MCF 10A (cell line): ENCODE measurements at regions of chr9 and their contacts with region 1.

Region 1: DNA sequence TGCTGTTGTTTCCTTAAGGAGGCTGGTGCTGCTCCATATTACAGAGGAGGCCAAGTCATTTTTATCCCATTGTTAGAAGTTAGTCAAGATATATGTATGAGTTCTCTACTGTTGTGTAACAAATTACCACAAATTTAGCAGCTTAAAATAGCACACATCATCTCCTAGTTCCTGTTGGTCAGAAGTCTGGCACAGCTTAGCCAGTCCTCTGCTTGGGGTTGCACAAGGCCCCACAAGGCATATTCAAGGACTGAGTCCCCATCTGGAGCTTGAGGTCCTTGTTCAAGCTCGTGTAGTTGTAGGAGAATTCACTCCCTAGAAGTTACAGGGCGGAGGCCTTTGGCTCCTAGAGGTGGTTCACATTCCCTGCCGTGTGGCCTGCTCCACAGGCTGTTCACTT is 14.7 kb downstream of the MTAP start:
- DNase-seq: peak; percentile 80
- H3K4me3 Mint-ChIP-seq: no peak overlapping the region
- H3K27ac Mint-ChIP-seq: no peak overlapping the region
- H3K4me1 Mint-ChIP-seq: no peaks in the 10 kb centered on the region
- H3K27me3 Mint-ChIP-seq: no peaks in the 10 kb centered on the region
- CTCF ChIP-seq: no peak

Region 2: DNA sequence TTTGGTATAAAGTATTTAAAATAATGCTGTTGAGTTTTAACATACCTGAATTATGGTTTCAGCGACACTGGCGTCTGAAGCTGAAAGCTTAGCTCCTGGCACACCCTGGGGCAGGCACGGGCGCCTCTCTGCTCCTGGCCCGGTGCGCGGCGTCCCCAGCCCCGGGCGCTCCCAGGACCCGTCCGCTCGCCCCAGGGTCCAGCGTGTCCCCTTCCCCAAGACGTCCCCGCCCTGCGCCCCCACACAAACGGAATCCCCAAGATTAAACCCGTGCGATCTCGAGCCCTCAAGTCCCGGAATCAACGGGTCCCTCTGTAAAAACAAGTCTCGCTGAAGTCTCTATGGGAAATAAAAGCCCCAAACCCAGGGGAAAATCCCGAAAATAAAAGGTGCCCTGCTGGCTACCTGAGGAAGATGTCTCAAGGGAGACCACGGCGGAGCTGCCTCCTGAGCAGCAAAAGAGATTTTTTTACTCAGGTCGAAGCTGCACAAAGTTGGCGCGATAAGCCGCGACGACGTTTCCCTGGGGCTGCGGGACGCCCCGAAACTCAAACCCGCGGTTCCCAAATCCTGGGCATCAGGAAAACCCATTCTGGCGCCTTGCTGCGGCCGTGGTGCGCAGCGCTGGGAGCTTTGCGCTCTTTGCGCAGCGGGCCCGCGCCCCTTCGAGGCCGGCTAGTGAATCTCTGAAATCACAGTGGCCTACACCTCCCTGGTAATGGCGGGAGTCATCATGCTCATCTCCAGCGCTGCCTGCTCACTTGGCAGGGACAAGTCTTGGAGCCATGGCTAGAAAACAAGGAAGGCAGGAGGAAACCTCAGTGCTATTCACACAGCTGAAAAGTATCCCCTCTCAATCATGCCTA is 414.6 kb before region 1 on chr9:
- CTCF ChIA-PET with region 1: no interaction called
- POLR2A ChIA-PET with region 1: no interaction called
- intact Hi-C with region 1: no loop called
- DNase-seq: no peak
- H3K4me3 Mint-ChIP-seq: no peak overlapping the region
- H3K27ac Mint-ChIP-seq: no peak overlapping the region
- H3K4me1 Mint-ChIP-seq: no peaks in the 10 kb centered on the region
- H3K27me3 Mint-ChIP-seq: peaks cover 33% of the 10 kb centered on the region
- CTCF ChIP-seq: no peak

Region 3: GRCh38 chr9:21777701-21778100 is 39.5 kb before region 1 on chr9:
- CTCF ChIA-PET with region 1: no interaction called
- POLR2A ChIA-PET with region 1: no interaction called
- intact Hi-C with region 1: no loop called
- DNase-seq: no peak
- H3K4me3 Mint-ChIP-seq: no peak overlapping the region
- H3K27ac Mint-ChIP-seq: no peak overlapping the region
- H3K4me1 Mint-ChIP-seq: no peaks in the 10 kb centered on the region
- H3K27me3 Mint-ChIP-seq: no peaks in the 10 kb centered on the region
- CTCF ChIP-seq: no peak

Region 4: DNA sequence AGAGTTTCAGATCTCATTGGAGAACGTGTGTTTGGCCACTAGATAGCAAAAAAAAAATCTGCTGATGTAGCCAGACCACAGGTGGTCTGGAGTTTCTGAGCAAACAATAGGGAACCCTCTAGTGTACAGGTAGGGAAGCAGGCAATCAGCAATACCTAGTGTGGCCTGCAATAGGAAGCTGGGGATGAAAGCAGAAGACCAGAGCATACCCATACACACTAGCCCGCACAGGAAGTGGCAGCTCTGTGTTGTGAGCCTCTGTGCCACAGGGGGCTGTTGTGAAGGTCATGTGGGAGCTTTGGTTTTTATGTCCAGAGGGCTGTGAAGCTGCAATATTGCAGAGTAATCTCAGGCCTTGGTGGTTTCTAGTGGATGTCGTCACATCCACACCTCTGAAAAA is 66.5 kb after region 1 on chr9:
- CTCF ChIA-PET with region 1: no interaction called
- POLR2A ChIA-PET with region 1: no interaction called
- intact Hi-C with region 1: no loop called
- DNase-seq: no peak
- H3K4me3 Mint-ChIP-seq: no peak overlapping the region
- H3K27ac Mint-ChIP-seq: no peak overlapping the region
- H3K4me1 Mint-ChIP-seq: no peaks in the 10 kb centered on the region
- H3K27me3 Mint-ChIP-seq: no peaks in the 10 kb centered on the region
- CTCF ChIP-seq: no peak

Region 5: GRCh38 chr9:22158927-22159346 is 341.8 kb after region 1 on chr9:
- CTCF ChIA-PET with region 1: no interaction called
- POLR2A ChIA-PET with region 1: interaction called, 18 read pairs
- intact Hi-C with region 1: no loop called
- DNase-seq: peak; percentile 74
- H3K4me3 Mint-ChIP-seq: peak overlapping the region; percentile 25
- H3K27ac Mint-ChIP-seq: peak overlapping the region; percentile 66
- H3K4me1 Mint-ChIP-seq: peaks cover 16% of the 10 kb centered on the region
- H3K27me3 Mint-ChIP-seq: no peaks in the 10 kb centered on the region
- CTCF ChIP-seq: no peak